K562 (cell line): ENCODE measurements at regions of chr1 and their contacts with region 1.

Region 1: DNA sequence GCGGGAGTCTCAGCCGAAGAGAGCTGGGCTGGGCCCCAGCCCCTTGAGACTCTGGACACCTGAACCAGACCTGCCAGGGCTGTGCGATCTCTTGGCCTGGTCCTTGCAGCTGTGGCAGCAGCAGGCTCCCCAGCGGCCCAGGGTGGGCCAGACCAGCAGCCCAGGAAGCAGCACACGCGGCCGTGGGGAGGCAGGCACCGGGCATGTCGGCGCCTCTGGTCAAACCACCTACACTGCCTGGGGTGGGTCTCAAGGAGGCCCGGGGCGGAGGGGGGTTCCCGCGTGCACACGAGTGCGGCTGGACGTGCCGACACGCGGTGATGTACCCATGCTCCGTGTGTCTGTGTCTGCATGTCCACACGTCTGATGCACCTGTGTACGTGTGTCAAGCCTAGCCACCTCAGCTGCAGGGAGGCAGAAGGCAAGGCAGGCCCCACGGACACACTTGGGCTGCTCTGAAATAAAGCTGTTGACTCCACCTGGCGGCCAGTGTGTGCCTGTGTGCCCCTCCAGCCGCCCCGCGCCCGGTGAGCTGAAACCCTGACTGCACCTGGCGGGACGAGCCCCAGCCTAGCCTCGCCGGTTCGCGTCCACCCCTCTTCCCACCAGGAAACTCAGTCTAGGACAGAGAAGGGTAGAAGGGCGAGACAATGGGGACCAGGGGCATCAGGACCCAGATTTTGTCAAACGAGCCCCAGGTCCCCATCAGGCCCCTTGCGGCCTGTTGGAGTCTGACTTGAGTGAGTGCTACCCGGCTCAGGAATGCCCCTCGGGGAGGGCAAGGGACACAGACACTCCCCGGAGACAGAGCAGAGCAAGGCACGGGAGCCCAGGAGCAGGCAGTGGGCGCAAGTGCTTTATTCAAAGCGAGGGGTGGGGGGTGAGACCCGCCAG is 11.6 kb downstream of the SCNN1D start:
- DNase-seq: peak; percentile 62 to 89 (median 70)
- ATAC-seq: peak; percentile 81
- H3K4me3 ChIP-seq: no peak overlapping the region
- H3K27ac ChIP-seq: no peak overlapping the region
- H3K4me1 ChIP-seq: peaks cover 5 to 85% of the 10 kb centered on the region in 2 experiments; a peak in 3 of 5 replicates
- H3K27me3 ChIP-seq: peaks cover 2 to 20% of the 10 kb centered on the region in 2 experiments; a peak in 3 of 5 replicates
- CTCF ChIP-seq: peak; percentile 88 to 93 (median 88)
- EP300 ChIP-seq: no peak
- POLR2A ChIP-seq: peak; percentile 49
- RAD21 ChIP-seq: peak in 1 of 2 experiments; percentile 83; a peak in 2 of 4 replicates

Region 2: GRCh38 chr1:983799-984473 is 307.9 kb before region 1 on chr1:
- CTCF ChIA-PET with region 1: interaction called, 8 read pairs
- POLR2A ChIA-PET with region 1: no interaction called
- in situ Hi-C with region 1: no loop called
- intact Hi-C with region 1: loop called (anchors 10 kb)
- DNase-seq: peak; percentile 69 to 90 (median 88)
- ATAC-seq: peak; percentile 82
- H3K4me3 ChIP-seq: no peak overlapping the region
- H3K27ac ChIP-seq: no peak overlapping the region
- H3K4me1 ChIP-seq: peaks cover 0 to 51% of the 10 kb centered on the region in 2 experiments; a peak in 2 of 5 replicates
- H3K27me3 ChIP-seq: peaks cover 39 to 51% of the 10 kb centered on the region in 2 experiments; a peak in 4 of 5 replicates
- CTCF ChIP-seq: peak; percentile 54 to 90 (median 77); a peak in 4 of 6 replicates
- EP300 ChIP-seq: no peak
- POLR2A ChIP-seq: no peak
- RAD21 ChIP-seq: peak; percentile 68 to 82

Region 3: DNA sequence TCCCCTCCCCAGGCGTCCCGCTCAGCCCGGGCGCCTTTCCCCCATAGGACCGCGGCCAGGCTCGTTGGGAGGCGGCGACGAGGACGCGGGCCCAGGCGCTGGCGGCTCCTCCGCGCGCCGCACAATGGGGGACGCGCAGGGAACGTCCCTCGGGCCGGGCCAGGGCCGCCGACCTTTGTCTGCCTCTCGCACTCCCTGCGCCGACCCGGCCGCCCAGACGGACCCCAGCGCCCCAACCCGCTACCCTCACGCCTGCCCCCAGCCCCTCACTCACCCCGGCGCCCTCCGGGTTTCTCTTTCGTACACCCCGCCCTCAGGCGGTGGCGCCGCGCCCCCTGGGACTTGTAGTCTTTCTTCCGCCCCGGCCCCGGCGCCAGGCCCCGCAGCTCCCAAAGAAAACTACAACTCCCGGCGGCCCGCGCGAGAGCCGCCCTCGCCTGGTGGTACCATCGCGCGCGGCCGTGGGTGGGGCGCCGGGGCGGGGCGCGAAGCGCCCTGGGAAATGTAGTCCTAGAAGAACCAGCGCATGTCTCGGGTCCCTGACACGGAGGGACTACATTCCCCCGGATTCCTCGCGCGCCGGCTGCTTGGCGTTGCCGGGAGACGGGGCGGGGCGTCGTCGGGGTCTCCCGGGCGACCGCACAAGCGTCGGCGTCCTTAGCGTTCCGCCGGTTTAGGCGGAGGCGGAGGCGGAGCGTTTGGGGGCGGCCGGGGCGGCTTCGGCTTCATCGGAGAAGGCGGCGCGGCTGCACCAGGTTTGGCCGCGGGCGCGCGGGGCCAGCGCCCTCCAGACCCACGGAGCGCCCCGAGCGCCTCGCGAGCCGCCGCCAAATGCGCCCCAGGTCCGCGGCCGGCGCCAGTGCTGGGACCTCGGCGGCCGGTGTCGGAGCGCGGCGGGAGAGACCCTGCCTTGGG is 175.8 kb before region 1 on chr1 and contains the start of gene C1orf159:
- CTCF ChIA-PET with region 1: no interaction called
- POLR2A ChIA-PET with region 1: no interaction called
- in situ Hi-C with region 1: no loop called
- intact Hi-C with region 1: loop called (anchors 2 kb)
- DNase-seq: peak; percentile 96 to 99 (median 98)
- ATAC-seq: peak; percentile 98
- H3K4me3 ChIP-seq: peak within 1 kb of the TSS; percentile 96
- H3K27ac ChIP-seq: peak within 1 kb of the TSS; percentile 87
- H3K4me1 ChIP-seq: peaks cover 0 to 41% of the 10 kb centered on the region in 2 experiments; a peak in 2 of 5 replicates
- H3K27me3 ChIP-seq: peaks cover 25 to 36% of the 10 kb centered on the region in 2 experiments; a peak in 4 of 5 replicates
- CTCF ChIP-seq: no peak; a peak in 1 of 6 replicates
- EP300 ChIP-seq: no peak
- POLR2A ChIP-seq: peak; percentile 68
- RAD21 ChIP-seq: no peak
- polyA plus RNA-seq, gene C1orf159: 0.28 to 0.60 TPM